ENCODE measurements at regions of chr22 and their contacts with region 1.

Region 1: GRCh38 chr22:43187171-43188099 is 501 bp upstream of the TTLL12 start:
- H3K4me3 ChIP-seq: peak overlapping the region; percentile 37
- H3K27ac ChIP-seq: peak overlapping the region; percentile 90
- H3K4me1 ChIP-seq: no peaks in the 10 kb centered on the region
- CTCF ChIP-seq: peak; percentile 87

Region 2: DNA sequence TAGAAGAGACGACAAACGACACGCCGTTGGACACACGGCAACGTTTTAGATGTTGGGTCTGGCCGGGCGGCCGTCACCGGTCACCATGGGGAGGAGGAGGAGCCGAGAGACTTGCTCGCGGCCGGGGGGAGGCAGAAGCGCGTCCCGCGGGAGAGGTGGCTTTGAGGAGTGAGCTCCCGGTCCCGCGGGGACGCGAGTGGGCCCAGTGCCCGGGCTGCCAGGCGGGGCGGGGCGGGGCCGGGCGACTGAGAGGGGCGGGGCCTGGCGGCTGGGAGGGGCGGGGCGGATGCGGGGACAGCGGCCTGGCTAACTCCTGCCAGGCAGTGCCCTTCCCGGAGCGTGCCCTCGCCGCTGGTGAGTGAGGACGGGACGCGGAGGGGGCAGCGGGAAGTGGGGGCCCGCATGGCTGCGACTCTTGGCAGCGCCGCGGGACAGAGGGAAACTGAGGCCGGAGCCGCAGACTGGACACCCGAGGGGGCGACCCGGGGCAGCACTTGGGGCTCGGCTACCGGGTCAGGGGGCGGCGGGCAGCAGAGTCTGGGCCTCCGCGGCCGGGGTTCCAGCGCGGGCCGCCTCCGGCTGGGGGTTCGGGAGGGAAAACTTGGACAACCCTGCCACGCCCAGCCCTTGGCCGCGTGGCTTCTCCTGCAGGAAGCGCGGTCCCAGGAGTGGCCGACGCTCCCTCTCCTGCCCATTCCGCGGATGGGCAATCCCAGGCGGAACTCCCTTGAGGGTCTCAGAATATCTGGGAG is 36.0 kb before region 1 on chr22 and contains the start of gene TSPO:
- CTCF ChIA-PET with region 1: no interaction called
- POLR2A ChIA-PET with region 1: interaction called, 10 read pairs
- H3K4me3 ChIP-seq: peak within 1 kb of the TSS; percentile 51
- H3K27ac ChIP-seq: peak within 1 kb of the TSS; percentile 49; the same call in 1 of the 2 replicates
- H3K4me1 ChIP-seq: peaks cover 10% of the 10 kb centered on the region
- CTCF ChIP-seq: no peak

Region 3: DNA sequence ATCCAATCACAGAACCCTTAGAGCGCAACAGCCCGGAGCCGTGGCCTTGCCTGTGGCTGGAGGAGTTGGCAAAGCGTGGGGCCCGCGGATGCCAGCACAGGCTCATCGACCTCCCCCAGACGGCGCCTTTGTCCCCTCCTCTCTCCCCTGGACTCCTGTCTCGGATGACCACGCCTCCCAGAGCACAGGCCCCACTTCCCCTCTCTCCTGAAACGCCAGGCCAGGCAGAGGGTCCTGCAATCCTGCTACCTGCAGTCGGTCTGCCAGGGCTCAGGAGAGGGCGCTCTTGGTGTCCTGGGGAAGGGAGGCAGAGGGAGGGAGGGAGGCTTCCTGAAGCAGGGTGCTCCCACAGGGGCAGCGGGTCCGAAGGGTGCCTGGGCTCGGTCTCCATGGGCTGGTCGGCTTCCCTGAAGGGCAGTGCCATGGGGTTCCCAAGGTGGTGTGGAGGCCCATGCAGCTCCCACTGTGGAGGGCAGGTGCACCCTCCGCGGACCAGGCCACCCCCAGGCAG is 16.1 kb after region 1 on chr22:
- CTCF ChIA-PET with region 1: interaction called, 13 read pairs
- POLR2A ChIA-PET with region 1: interaction called, 20 read pairs
- H3K4me3 ChIP-seq: no peak overlapping the region
- H3K27ac ChIP-seq: no peak overlapping the region
- H3K4me1 ChIP-seq: no peaks in the 10 kb centered on the region
- CTCF ChIP-seq: no peak

Region 4: DNA sequence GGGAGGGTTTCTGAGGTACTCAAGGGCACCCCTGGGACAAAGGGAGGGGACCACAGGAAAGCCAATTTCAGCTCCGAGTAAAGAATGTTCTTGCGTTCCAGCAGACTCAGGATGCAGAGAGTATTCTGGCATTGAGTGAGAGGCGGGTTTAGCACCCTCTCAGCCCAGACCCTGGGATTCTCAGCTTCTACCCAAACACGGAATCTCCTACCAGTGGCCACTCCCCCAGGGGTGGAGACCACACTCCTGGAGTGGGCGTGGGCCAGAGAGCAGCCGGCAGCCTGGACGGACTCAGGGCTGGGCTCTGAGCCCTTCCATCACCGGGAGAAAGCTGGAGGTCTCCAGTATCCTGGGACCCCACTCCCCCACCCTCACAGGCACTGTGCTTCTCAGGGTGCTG is 25.6 kb after region 1 on chr22:
- CTCF ChIA-PET with region 1: interaction called, 4 read pairs
- POLR2A ChIA-PET with region 1: interaction called, 10 read pairs
- H3K4me3 ChIP-seq: no peak overlapping the region
- H3K27ac ChIP-seq: no peak overlapping the region
- H3K4me1 ChIP-seq: no peaks in the 10 kb centered on the region
- CTCF ChIP-seq: no peak

Region 5: GRCh38 chr22:43241138-43241597 is 53.7 kb after region 1 on chr22:
- CTCF ChIA-PET with region 1: no interaction called
- POLR2A ChIA-PET with region 1: no interaction called
- H3K4me3 ChIP-seq: no peak overlapping the region
- H3K27ac ChIP-seq: no peak overlapping the region
- H3K4me1 ChIP-seq: no peaks in the 10 kb centered on the region
- CTCF ChIP-seq: no peak